ENCODE measurements at regions of chr10 and their contacts with region 1.

Region 1: DNA sequence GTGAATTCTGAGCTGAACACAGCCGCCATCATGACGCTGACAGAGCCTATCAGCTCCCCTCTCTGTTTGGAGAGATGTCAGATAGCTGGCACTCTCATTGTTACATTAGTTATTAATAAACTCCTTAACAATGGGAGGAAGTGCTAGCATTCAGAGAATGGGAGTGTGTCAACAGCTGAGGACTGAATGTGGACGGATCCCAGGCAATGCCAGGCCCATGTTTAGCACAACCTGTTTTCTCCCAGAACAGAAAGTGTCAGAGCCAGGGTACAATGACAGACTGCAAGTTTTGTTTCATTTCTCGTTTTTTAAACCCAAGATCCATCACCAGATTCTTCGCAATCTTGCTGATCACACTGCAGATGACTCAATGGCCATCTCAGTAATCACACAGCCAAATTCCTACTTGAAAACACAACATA is 99.6 kb downstream of the PRPF18 start:
- DNase-seq: no peak
- ATAC-seq: no peak
- H3K4me3 ChIP-seq: no peak overlapping the region
- H3K27ac ChIP-seq: no peak overlapping the region
- H3K4me1 ChIP-seq: no peaks in the 10 kb centered on the region; a peak in 1 of 4 replicates
- H3K27me3 ChIP-seq: no peaks in the 10 kb centered on the region
- CTCF ChIP-seq: no peak
- POLR2A ChIP-seq: no peak
- RAD21 ChIP-seq: no peak

Region 2: GRCh38 chr10:14084875-14085274 is 398.5 kb after region 1 on chr10:
- CTCF ChIA-PET with region 1: no interaction called
- POLR2A ChIA-PET with region 1: no interaction called
- RAD21 ChIA-PET with region 1: no interaction called
- intact Hi-C with region 1: loop called (anchors 5 kb)
- DNase-seq: no peak
- ATAC-seq: no peak
- H3K4me3 ChIP-seq: no peak overlapping the region
- H3K27ac ChIP-seq: no peak overlapping the region
- H3K4me1 ChIP-seq: no peaks in the 10 kb centered on the region
- H3K27me3 ChIP-seq: peaks cover 31% of the 10 kb centered on the region; the same call in 1 of the 2 replicates
- CTCF ChIP-seq: no peak
- POLR2A ChIP-seq: no peak
- RAD21 ChIP-seq: no peak